Naive thymus-derived CD4-positive, alpha-beta T cell (primary cell): ENCODE measurements at regions of chr12 and their contacts with region 1.

Region 1: GRCh38 chr12:121917979-121918678 is at the start of gene CFAP251:
- DNase-seq: peak; percentile 88 to 98 (median 94)
- ATAC-seq: peak; percentile 99
- H3K4me3 ChIP-seq: peak within 1 kb of the TSS; percentile 58
- H3K4me3 Mint-ChIP-seq: peak within 1 kb of the TSS; percentile 68 to 94 (median 86)
- H3K27ac ChIP-seq: peak within 1 kb of the TSS; percentile 71
- H3K27ac Mint-ChIP-seq: peak within 1 kb of the TSS; percentile 91 to 98 (median 93)
- H3K4me1 ChIP-seq: peaks cover 4 to 10% of the 10 kb centered on the region in 2 donors
- H3K4me1 Mint-ChIP-seq: peaks cover 8 to 19% (median 13%) of the 10 kb centered on the region in 7 donors
- H3K27me3 ChIP-seq: no peaks in the 10 kb centered on the region
- H3K27me3 Mint-ChIP-seq: no peaks in the 10 kb centered on the region
- total RNA-seq, gene CFAP251: 0.38 to 1.5 (median 0.88) TPM

Region 2: DNA sequence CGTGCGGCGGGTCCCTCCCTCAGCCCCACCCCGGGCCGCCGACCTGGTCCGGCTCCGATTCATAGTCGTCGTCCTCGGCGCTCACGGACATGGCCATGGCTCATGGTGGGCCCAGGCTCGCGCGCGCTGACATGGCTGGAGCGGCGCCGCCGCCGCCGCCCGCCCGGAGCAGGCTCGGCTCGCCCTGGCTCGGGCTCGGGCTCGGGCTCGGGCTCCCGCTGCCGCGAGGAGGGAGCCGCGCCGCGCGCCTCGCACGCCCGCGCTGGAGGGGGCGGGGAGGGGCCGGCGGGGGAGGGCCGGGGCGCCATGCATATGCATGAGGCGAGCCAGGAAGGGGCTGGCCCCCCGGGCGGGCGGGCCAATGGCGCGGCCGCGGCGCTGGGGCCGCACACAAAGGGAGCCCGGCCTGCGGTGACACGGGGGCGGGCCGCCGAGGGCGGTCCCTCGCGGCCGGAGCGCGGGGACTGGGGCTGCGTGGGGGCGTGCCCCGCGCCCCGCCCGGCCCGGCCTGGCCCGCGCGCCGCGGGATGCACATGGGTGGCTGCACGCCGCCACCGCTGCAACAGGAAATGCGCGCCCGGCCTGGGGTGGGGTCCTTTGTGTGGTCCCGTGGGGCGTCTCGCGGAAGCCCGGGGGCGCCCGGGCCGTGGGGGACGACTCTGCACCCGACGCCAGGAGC is 450.9 kb before region 1 on chr12:
- CTCF ChIA-PET with region 1: no interaction called
- POLR2A ChIA-PET with region 1: no interaction called
- intact Hi-C with region 1: loop called in 1 of 2 experiments (anchors 1 kb)
- DNase-seq: peak; percentile 79 to 93 (median 86)
- ATAC-seq: peak; percentile 92
- H3K4me3 ChIP-seq: peak overlapping the region; percentile 44
- H3K4me3 Mint-ChIP-seq: peak overlapping the region in 6 of 10 donors; percentile 45 to 90 (median 59)
- H3K27ac ChIP-seq: peak overlapping the region; percentile 73
- H3K27ac Mint-ChIP-seq: no peak overlapping the region
- H3K4me1 ChIP-seq: peaks cover 7 to 17% of the 10 kb centered on the region in 2 donors
- H3K4me1 Mint-ChIP-seq: peaks cover 18 to 34% (median 30%) of the 10 kb centered on the region in 7 donors
- H3K27me3 ChIP-seq: no peaks in the 10 kb centered on the region
- H3K27me3 Mint-ChIP-seq: peaks cover 0 to 3% (median 0%) of the 10 kb centered on the region in 5 donors

Region 3: GRCh38 chr12:121536899-121537813 is 381.0 kb before region 1 on chr12:
- CTCF ChIA-PET with region 1: no interaction called
- POLR2A ChIA-PET with region 1: no interaction called
- intact Hi-C with region 1: no loop called
- DNase-seq: peak in 8 of 9 donors; percentile 20 to 70 (median 28)
- ATAC-seq: peak; percentile 51
- H3K4me3 ChIP-seq: peak overlapping the region; percentile 62
- H3K4me3 Mint-ChIP-seq: peak overlapping the region; percentile 51 to 91 (median 81)
- H3K27ac ChIP-seq: peak overlapping the region; percentile 74
- H3K27ac Mint-ChIP-seq: peak overlapping the region; percentile 43 to 97 (median 92)
- H3K4me1 ChIP-seq: peaks cover 29 to 36% of the 10 kb centered on the region in 2 donors
- H3K4me1 Mint-ChIP-seq: peaks cover 21 to 56% (median 44%) of the 10 kb centered on the region in 7 donors
- H3K27me3 ChIP-seq: no peaks in the 10 kb centered on the region
- H3K27me3 Mint-ChIP-seq: peaks cover 0 to 4% (median 0%) of the 10 kb centered on the region in 5 donors

Region 4: GRCh38 chr12:121748571-121749253 is 169.4 kb before region 1 on chr12:
- CTCF ChIA-PET with region 1: no interaction called
- POLR2A ChIA-PET with region 1: no interaction called
- intact Hi-C with region 1: no loop called
- DNase-seq: no peak
- ATAC-seq: peak; percentile 64
- H3K4me3 ChIP-seq: no peak overlapping the region
- H3K4me3 Mint-ChIP-seq: no peak overlapping the region
- H3K27ac ChIP-seq: peak overlapping the region; percentile 14
- H3K27ac Mint-ChIP-seq: peak overlapping the region in 7 of 9 donors; percentile 39 to 76 (median 51)
- H3K4me1 ChIP-seq: no peaks in the 10 kb centered on the region
- H3K4me1 Mint-ChIP-seq: peaks cover 0 to 7% (median 2%) of the 10 kb centered on the region in 7 donors
- H3K27me3 ChIP-seq: no peaks in the 10 kb centered on the region
- H3K27me3 Mint-ChIP-seq: no peaks in the 10 kb centered on the region

Region 5: DNA sequence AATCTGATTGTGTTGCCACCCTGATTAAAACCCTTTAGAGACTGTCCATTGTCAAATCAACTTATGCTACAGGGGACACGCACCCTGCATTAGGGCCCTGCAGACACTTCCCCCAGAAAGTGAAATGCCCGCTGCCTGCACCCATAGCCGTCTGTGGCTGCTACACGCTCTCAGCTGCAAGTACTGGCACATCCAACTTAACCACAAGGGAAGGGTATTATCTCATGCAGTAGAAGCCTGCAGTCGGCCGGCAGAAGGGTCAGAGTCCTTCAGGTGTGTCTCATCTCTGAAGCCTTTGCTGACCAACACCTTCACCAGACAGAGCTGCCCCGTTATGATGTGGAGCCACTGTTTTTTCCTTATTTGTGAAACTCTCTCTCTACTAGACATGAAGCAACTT is 21.1 kb after region 1 on chr12:
- CTCF ChIA-PET with region 1: no interaction called
- POLR2A ChIA-PET with region 1: no interaction called
- intact Hi-C with region 1: no loop called
- DNase-seq: no peak
- ATAC-seq: peak; percentile 49
- H3K4me3 ChIP-seq: no peak overlapping the region
- H3K4me3 Mint-ChIP-seq: no peak overlapping the region
- H3K27ac ChIP-seq: no peak overlapping the region
- H3K27ac Mint-ChIP-seq: peak overlapping the region in 1 of 9 donors; percentile 55
- H3K4me1 ChIP-seq: no peaks in the 10 kb centered on the region
- H3K4me1 Mint-ChIP-seq: peaks cover 4 to 11% (median 6%) of the 10 kb centered on the region in 7 donors
- H3K27me3 ChIP-seq: no peaks in the 10 kb centered on the region
- H3K27me3 Mint-ChIP-seq: no peaks in the 10 kb centered on the region

Region 6: GRCh38 chr12:122004633-122005071 is 86.5 kb after region 1 on chr12:
- CTCF ChIA-PET with region 1: interaction called, 5 read pairs
- POLR2A ChIA-PET with region 1: no interaction called
- intact Hi-C with region 1: loop called in 1 of 2 experiments (anchors 5 kb)
- DNase-seq: no peak
- ATAC-seq: no peak
- H3K4me3 ChIP-seq: no peak overlapping the region
- H3K4me3 Mint-ChIP-seq: peak overlapping the region in 7 of 10 donors; percentile 10 to 75 (median 51)
- H3K27ac ChIP-seq: peak overlapping the region; percentile 40
- H3K27ac Mint-ChIP-seq: peak overlapping the region in 3 of 9 donors; percentile 48 to 86 (median 81)
- H3K4me1 ChIP-seq: peaks cover 21 to 28% of the 10 kb centered on the region in 2 donors
- H3K4me1 Mint-ChIP-seq: peaks cover 10 to 38% (median 15%) of the 10 kb centered on the region in 7 donors
- H3K27me3 ChIP-seq: no peaks in the 10 kb centered on the region
- H3K27me3 Mint-ChIP-seq: peaks cover 0 to 31% (median 8%) of the 10 kb centered on the region in 5 donors

Region 7: GRCh38 chr12:122123051-122123760 is 205.1 kb after region 1 on chr12:
- CTCF ChIA-PET with region 1: interaction called, 3 read pairs
- POLR2A ChIA-PET with region 1: no interaction called
- intact Hi-C with region 1: loop called in 1 of 2 experiments (anchors 1 kb)
- DNase-seq: peak; percentile 52 to 82 (median 68)
- ATAC-seq: peak; percentile 73
- H3K4me3 ChIP-seq: no peak overlapping the region
- H3K4me3 Mint-ChIP-seq: peak overlapping the region; percentile 26 to 80 (median 59)
- H3K27ac ChIP-seq: peak overlapping the region; percentile 23
- H3K27ac Mint-ChIP-seq: peak overlapping the region; percentile 25 to 94 (median 80)
- H3K4me1 ChIP-seq: peaks cover 7 to 8% of the 10 kb centered on the region in 2 donors
- H3K4me1 Mint-ChIP-seq: peaks cover 30 to 51% (median 45%) of the 10 kb centered on the region in 7 donors
- H3K27me3 ChIP-seq: no peaks in the 10 kb centered on the region
- H3K27me3 Mint-ChIP-seq: no peaks in the 10 kb centered on the region

Region 8: GRCh38 chr12:122265931-122266771 is 348.0 kb after region 1 on chr12 and contains the start of gene VPS33A:
- CTCF ChIA-PET with region 1: interaction called, 3 read pairs
- POLR2A ChIA-PET with region 1: no interaction called
- intact Hi-C with region 1: loop called in 1 of 2 experiments (anchors 2 kb)
- DNase-seq: peak; percentile 82 to 96 (median 90)
- ATAC-seq: peak; percentile 89
- H3K4me3 ChIP-seq: peak within 1 kb of the TSS; percentile 74
- H3K4me3 Mint-ChIP-seq: peak within 1 kb of the TSS; percentile 93 to 99 (median 96)
- H3K27ac ChIP-seq: peak within 1 kb of the TSS; percentile 95
- H3K27ac Mint-ChIP-seq: peak within 1 kb of the TSS; percentile 98 to 100 (median 99)
- H3K4me1 ChIP-seq: peaks cover 12 to 17% of the 10 kb centered on the region in 2 donors
- H3K4me1 Mint-ChIP-seq: peaks cover 0 to 37% (median 32%) of the 10 kb centered on the region in 7 donors
- H3K27me3 ChIP-seq: no peaks in the 10 kb centered on the region
- H3K27me3 Mint-ChIP-seq: peaks cover 0 to 6% (median 0%) of the 10 kb centered on the region in 5 donors
- total RNA-seq, gene VPS33A: 19.9 to 34.5 (median 31.4) TPM